IMR-90 (cell line): ENCODE measurements at regions of chr5 and their contacts with region 1.

Region 1: DNA sequence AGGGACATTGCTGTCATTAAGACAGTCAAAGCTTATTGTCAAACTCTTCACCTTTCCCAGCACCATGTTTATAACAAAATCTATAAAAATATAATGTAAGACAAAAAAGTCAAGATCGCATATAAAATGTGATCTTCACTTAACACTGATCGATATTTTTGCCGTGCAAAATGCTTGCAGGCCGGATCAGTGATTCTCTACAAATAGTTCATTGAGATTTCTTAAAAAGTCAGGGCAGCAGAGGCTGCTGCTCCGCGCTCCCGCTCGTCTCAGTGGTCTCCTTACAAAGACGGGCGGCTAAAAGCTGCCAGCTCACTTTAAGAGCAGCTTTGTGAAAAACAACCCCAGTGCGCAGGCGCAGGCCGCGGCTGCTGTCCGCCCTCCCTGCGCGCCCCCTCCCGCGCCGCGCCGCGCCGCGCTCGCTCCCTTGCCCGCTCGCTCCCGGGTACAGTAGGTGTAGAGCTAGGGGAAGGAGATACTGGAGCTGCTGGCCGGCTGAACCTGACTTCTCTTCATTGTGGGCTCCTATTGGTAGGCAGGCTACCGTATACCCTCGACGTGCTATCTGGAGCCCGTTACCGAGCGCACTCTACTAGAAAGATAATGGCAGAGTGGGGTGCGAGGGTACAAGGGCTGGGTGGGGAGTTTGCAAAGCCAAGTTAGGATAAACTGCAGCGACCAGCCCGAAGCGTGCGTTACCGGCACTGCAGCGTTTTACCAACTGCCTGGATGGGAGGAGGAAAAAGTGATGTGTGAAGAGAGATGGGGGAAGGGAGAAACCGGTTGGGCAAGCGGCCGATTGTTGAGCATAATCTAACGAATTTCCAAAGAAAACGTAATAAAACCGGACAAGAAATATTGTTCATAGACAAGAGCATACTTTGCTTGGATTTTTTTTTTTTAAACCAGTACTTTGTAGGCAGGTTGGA is at the start of gene ARRDC3:
- DNase-seq: peak; percentile 94
- ATAC-seq: peak; percentile 63
- H3K4me3 ChIP-seq: peak within 1 kb of the TSS; percentile 71
- H3K27ac ChIP-seq: peak within 1 kb of the TSS; percentile 84
- H3K4me1 ChIP-seq: no peaks in the 10 kb centered on the region
- H3K27me3 ChIP-seq: no peaks in the 10 kb centered on the region
- CTCF ChIP-seq: no peak
- POLR2A ChIP-seq: peak; percentile 100
- RAD21 ChIP-seq: no peak
- total RNA-seq, gene ARRDC3: 82.2 and 86.7 TPM in 2 replicates

Region 2: DNA sequence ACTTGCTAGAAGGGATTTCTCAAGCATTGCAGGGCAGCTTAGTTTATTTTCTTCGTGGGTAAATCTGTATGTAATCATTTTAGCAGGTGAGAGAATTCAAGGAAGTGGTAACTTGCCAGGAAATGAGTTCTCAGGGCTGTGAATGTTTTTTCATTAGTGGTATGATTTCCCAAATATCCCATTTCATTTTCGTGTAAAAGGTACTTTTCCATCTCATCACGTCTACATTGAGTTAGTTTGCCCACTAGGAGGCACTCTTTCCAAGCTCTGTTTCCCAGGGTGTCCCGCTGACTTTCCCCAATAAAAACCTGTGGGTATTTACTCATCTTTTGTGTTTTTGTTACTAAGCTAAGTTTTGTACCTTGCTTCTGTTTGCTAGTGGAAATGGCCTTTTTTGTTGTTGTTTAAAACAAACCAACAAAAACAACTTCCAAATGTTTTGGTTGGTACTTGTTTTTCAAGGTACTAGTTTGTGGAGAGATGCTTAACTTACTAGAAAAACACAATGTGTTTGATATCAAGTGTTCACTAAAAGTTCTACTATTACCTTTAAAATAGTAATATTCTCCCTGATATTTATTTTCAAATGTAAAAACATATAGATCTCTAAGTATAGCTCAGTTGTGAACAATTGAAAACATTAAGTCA is 451.1 kb before region 1 on chr5:
- CTCF ChIA-PET with region 1: interaction called, 38 read pairs
- POLR2A ChIA-PET with region 1: interaction called, 3 read pairs
- dilution Hi-C with region 1: no loop called
- in situ Hi-C with region 1: no loop called
- intact Hi-C with region 1: loop called (anchors 1 kb)
- DNase-seq: peak; percentile 70
- ATAC-seq: peak; percentile 77
- H3K4me3 ChIP-seq: no peak overlapping the region
- H3K27ac ChIP-seq: no peak overlapping the region
- H3K4me1 ChIP-seq: peaks cover 1% of the 10 kb centered on the region; the same call in 1 of the 2 replicates
- H3K27me3 ChIP-seq: no peaks in the 10 kb centered on the region
- CTCF ChIP-seq: peak; percentile 90
- POLR2A ChIP-seq: no peak
- RAD21 ChIP-seq: peak; percentile 87

Region 3: DNA sequence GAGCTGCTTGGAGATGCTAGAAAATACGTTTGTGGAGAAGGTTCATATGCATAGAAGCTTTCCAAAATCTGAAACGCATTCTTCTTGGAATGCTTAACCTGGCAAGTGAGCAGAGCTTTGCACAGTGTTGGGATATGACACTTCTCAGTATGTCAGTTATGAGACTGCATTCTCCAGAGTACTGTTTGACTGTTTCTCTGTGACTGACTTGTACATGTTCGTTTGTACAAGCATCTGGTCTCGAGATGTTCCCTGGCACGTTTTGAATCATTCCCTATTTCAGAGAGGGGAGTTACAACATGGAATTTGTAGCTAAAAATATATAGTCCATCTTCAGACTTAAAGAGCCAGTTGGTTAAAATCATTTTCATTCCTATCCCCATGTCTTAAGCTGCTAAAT is 272.6 kb before region 1 on chr5:
- CTCF ChIA-PET with region 1: interaction called, 19 read pairs
- POLR2A ChIA-PET with region 1: interaction called, 5 read pairs
- dilution Hi-C with region 1: no loop called
- in situ Hi-C with region 1: no loop called
- intact Hi-C with region 1: no loop called
- DNase-seq: peak; percentile 35
- ATAC-seq: peak; percentile 53
- H3K4me3 ChIP-seq: no peak overlapping the region
- H3K27ac ChIP-seq: no peak overlapping the region
- H3K4me1 ChIP-seq: no peaks in the 10 kb centered on the region
- H3K27me3 ChIP-seq: no peaks in the 10 kb centered on the region
- CTCF ChIP-seq: no peak
- POLR2A ChIP-seq: no peak
- RAD21 ChIP-seq: no peak

Region 4: DNA sequence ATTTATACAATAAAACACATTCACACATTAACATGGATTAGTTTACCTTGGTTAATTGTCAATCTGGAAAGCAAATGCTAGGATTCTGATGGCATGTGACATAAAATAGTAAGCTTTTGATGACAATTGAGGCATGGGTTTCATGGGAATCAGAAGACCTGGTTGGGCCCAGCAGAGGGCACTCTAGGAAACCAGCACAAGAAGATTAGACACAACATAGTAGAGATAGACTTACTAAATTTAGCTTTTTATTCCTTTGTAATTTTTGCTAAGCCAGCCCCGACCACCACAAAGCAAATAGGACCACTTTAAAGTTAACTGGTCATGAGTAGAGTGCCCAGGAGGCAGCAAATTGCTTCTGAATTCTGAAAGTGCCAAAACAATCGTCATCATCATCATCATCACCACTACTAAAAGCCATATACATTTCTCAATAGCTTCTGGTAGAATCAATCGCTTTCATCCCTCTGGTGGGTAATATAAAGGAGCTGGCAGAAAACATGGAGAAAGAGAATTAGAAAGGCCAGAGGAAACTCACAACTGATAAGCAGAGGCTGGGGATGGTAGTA is 163.4 kb before region 1 on chr5:
- CTCF ChIA-PET with region 1: interaction called, 15 read pairs
- POLR2A ChIA-PET with region 1: no interaction called
- dilution Hi-C with region 1: no loop called
- in situ Hi-C with region 1: no loop called
- intact Hi-C with region 1: no loop called
- DNase-seq: peak; percentile 57
- ATAC-seq: peak; percentile 25; the same call in 1 of the 2 replicates
- H3K4me3 ChIP-seq: no peak overlapping the region
- H3K27ac ChIP-seq: peak overlapping the region; percentile 47; the same call in 1 of the 2 replicates
- H3K4me1 ChIP-seq: peaks cover 2% of the 10 kb centered on the region
- H3K27me3 ChIP-seq: no peaks in the 10 kb centered on the region
- CTCF ChIP-seq: peak; percentile 37
- POLR2A ChIP-seq: no peak
- RAD21 ChIP-seq: peak; percentile 41

Region 5: GRCh38 chr5:91272858-91273257 is 110.4 kb before region 1 on chr5:
- CTCF ChIA-PET with region 1: no interaction called
- POLR2A ChIA-PET with region 1: no interaction called
- dilution Hi-C with region 1: no loop called
- in situ Hi-C with region 1: no loop called
- intact Hi-C with region 1: no loop called
- DNase-seq: peak; percentile 69
- ATAC-seq: peak; percentile 57
- H3K4me3 ChIP-seq: no peak overlapping the region
- H3K27ac ChIP-seq: no peak overlapping the region
- H3K4me1 ChIP-seq: peaks cover 3% of the 10 kb centered on the region; the same call in 1 of the 2 replicates
- H3K27me3 ChIP-seq: no peaks in the 10 kb centered on the region
- CTCF ChIP-seq: no peak
- POLR2A ChIP-seq: no peak
- RAD21 ChIP-seq: peak; percentile 8; the same call in 1 of the 2 replicates

Region 6: DNA sequence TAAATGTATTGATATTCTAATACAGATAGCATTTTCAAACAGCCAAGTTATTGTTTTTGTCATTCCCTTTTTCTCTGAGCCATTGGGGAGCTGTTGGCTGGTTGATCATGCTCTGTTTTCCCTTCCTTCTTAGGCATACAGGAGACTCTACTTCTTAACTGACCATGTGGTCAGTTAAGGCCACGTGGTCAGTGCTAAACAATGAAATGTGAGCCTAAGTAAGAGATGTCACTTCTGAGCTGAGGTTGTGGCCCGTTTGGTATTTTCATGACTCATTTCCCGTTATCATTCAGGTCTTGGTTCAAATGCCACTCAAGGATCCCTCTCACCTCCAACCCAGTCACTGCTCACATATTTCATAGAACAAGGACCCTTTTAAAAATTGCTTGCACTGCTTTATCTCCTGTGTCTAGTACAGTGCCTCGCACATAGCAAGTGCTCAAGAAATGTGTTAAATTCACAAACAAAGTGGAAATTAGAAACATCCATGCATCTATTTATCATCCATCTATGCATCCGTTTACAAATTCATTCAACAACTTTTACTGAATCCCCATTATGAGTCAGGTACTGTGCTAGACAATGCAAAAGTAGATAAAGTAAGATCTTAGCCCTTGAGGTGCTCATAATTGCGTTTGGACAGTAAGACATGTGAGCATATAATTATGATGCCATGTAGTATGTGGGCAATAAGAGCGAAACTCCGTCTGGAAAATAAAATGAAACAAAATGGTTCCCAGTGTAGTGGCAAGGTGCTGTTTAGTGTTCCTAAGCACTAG is 50.8 kb before region 1 on chr5:
- CTCF ChIA-PET with region 1: interaction called, 3 read pairs
- POLR2A ChIA-PET with region 1: interaction called, 18 read pairs
- dilution Hi-C with region 1: no loop called
- in situ Hi-C with region 1: no loop called
- intact Hi-C with region 1: no loop called
- DNase-seq: peak; percentile 80
- ATAC-seq: peak; percentile 81
- H3K4me3 ChIP-seq: no peak overlapping the region
- H3K27ac ChIP-seq: no peak overlapping the region
- H3K4me1 ChIP-seq: peaks cover 5% of the 10 kb centered on the region
- H3K27me3 ChIP-seq: no peaks in the 10 kb centered on the region
- CTCF ChIP-seq: no peak
- POLR2A ChIP-seq: no peak
- RAD21 ChIP-seq: no peak

Region 7: GRCh38 chr5:92119140-92119539 is 735.8 kb after region 1 on chr5:
- CTCF ChIA-PET with region 1: no interaction called
- POLR2A ChIA-PET with region 1: interaction called, 23 read pairs
- dilution Hi-C with region 1: no loop called
- in situ Hi-C with region 1: no loop called
- intact Hi-C with region 1: no loop called
- DNase-seq: no peak
- ATAC-seq: no peak
- H3K4me3 ChIP-seq: no peak overlapping the region
- H3K27ac ChIP-seq: no peak overlapping the region
- H3K4me1 ChIP-seq: no peaks in the 10 kb centered on the region
- H3K27me3 ChIP-seq: no peaks in the 10 kb centered on the region
- CTCF ChIP-seq: no peak
- POLR2A ChIP-seq: no peak
- RAD21 ChIP-seq: no peak